Activated CD8-positive, alpha-beta T cell treated with anti-CD3 and anti-CD28 coated beads, Interleukin-2, amount 10 ng/mL, durations not matched to agents 7 days and 5 days (primary cell): ENCODE measurements at regions of chr6 and their contacts with region 1.

Region 1: GRCh38 chr6:127855542-127856159 is 45.2 kb downstream of the THEMIS start:
- DNase-seq: peak; percentile 61
- ATAC-seq: no peak
- H3K4me3 Mint-ChIP-seq: no peak overlapping the region
- H3K27ac Mint-ChIP-seq: peak overlapping the region; percentile 56
- H3K4me1 Mint-ChIP-seq: peaks cover 68% of the 10 kb centered on the region
- H3K27me3 Mint-ChIP-seq: no peaks in the 10 kb centered on the region

Region 2: DNA sequence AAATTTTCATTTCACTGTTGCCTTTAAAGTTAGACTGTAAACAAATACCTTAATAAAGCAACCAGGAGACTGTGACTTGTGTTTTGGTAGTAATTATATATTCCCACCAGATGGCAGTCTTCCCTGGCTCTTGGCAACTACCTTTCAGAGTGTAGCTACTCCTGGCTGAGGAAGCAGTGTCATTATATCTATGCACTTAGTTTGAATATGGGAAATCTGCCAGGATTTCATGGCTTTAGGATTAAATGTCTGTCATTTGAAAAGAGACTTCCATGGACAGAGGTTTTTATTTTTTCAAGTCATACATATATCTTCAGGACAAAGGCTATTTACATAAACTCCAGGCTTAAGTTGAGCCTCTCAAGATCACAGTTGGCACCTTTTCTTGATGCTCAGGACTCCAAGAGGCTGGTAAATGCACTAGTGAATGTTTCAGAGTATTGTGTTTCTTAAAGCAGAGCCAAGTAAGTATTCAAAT is 118.6 kb before region 1 on chr6:
- CTCF ChIA-PET with region 1: interaction called, 21 read pairs
- POLR2A ChIA-PET with region 1: no interaction called
- DNase-seq: peak; percentile 59
- ATAC-seq: peak; percentile 92
- H3K4me3 Mint-ChIP-seq: no peak overlapping the region
- H3K27ac Mint-ChIP-seq: no peak overlapping the region
- H3K4me1 Mint-ChIP-seq: peaks cover 26% of the 10 kb centered on the region
- H3K27me3 Mint-ChIP-seq: no peaks in the 10 kb centered on the region

Region 3: DNA sequence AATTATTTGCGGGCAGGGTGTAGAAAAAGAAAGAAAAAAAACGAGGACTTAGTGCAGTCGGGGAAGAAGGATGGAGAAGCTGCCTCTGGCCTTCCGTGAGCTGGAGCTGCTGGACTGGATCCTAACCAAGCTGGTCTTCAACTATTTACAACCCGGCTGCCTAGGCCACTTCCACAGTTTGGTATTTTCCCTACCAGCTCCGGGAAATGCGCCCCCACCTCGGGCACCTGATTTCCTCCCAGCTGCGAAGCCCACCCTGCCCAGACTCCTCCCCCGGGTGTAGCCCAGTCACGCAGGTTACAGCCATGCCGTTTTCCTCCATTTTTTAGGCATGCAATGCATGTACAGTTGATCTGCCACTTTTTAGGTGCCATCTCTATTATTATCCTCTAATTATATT is 24.0 kb after region 1 on chr6:
- CTCF ChIA-PET with region 1: interaction called, 15 read pairs
- POLR2A ChIA-PET with region 1: no interaction called
- DNase-seq: peak; percentile 67
- ATAC-seq: peak; percentile 67
- H3K4me3 Mint-ChIP-seq: peak overlapping the region; percentile 64
- H3K27ac Mint-ChIP-seq: peak overlapping the region; percentile 70
- H3K4me1 Mint-ChIP-seq: peaks cover 79% of the 10 kb centered on the region
- H3K27me3 Mint-ChIP-seq: no peaks in the 10 kb centered on the region

Region 4: GRCh38 chr6:127907960-127908640 is 52.4 kb after region 1 on chr6:
- CTCF ChIA-PET with region 1: interaction called, 15 read pairs
- POLR2A ChIA-PET with region 1: no interaction called
- DNase-seq: no peak
- ATAC-seq: peak; percentile 59
- H3K4me3 Mint-ChIP-seq: peak overlapping the region; percentile 79
- H3K27ac Mint-ChIP-seq: peak overlapping the region; percentile 84
- H3K4me1 Mint-ChIP-seq: peaks cover 65% of the 10 kb centered on the region
- H3K27me3 Mint-ChIP-seq: no peaks in the 10 kb centered on the region

Region 5: DNA sequence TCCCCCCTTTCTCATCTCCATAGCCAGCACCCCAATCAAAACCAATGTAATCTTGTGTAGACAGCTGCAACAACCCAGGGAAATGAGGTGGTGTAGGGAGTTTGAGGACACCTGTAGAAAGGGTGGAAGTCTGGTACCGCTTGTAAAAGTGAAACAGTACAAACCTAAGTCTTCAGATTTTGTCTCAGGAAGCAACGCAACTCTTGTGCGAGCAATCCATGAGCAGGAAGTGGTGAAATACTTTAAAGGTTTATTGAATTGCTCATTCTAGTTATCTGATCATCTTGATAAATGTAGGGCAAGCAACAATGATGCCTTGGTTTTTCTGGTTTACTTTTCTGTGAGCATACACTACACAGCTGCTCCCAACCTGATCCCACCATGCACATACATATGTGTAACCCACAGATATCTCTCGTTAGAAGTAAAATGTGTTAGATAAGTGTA is 116.3 kb after region 1 on chr6:
- CTCF ChIA-PET with region 1: interaction called, 25 read pairs
- POLR2A ChIA-PET with region 1: interaction called, 3 read pairs
- DNase-seq: peak; percentile 75
- ATAC-seq: peak; percentile 84
- H3K4me3 Mint-ChIP-seq: peak overlapping the region; percentile 76
- H3K27ac Mint-ChIP-seq: peak overlapping the region; percentile 97
- H3K4me1 Mint-ChIP-seq: peaks cover 76% of the 10 kb centered on the region
- H3K27me3 Mint-ChIP-seq: no peaks in the 10 kb centered on the region

Region 6: GRCh38 chr6:128017288-128017687 is 161.6 kb after region 1 on chr6:
- CTCF ChIA-PET with region 1: interaction called, 12 read pairs
- POLR2A ChIA-PET with region 1: no interaction called
- DNase-seq: no peak
- ATAC-seq: no peak
- H3K4me3 Mint-ChIP-seq: no peak overlapping the region
- H3K27ac Mint-ChIP-seq: no peak overlapping the region
- H3K4me1 Mint-ChIP-seq: peaks cover 4% of the 10 kb centered on the region
- H3K27me3 Mint-ChIP-seq: no peaks in the 10 kb centered on the region